Thyroid gland (tissue), 4 donors: ENCODE measurements at regions of chr19 and their contacts with region 1.

Region 1: GRCh38 chr19:17579661-17580244 is 24.3 kb downstream of the COLGALT1 start:
- DNase-seq: peak; percentile 16 to 18
- H3K4me3 ChIP-seq: no peak overlapping the region
- H3K27ac ChIP-seq: no peak overlapping the region
- H3K4me1 ChIP-seq: no peaks in the 10 kb centered on the region
- H3K27me3 ChIP-seq: no peaks in the 10 kb centered on the region
- CTCF ChIP-seq: no peak
- POLR2A ChIP-seq: no peak

Region 2: GRCh38 chr19:17721821-17722220 is 142.1 kb after region 1 on chr19:
- intact Hi-C with region 1: no loop called
- DNase-seq: no peak
- H3K4me3 ChIP-seq: no peak overlapping the region
- H3K27ac ChIP-seq: peak overlapping the region in 2 of 3 donors; percentile 15 to 66
- H3K4me1 ChIP-seq: peaks cover 22 to 43% of the 10 kb centered on the region in 2 donors
- H3K27me3 ChIP-seq: no peaks in the 10 kb centered on the region
- CTCF ChIP-seq: no peak
- POLR2A ChIP-seq: no peak

Region 3: GRCh38 chr19:17985037-17985818 is 405.5 kb after region 1 on chr19:
- intact Hi-C with region 1: loop called (anchors 10 kb)
- DNase-seq: no peak
- H3K4me3 ChIP-seq: no peak overlapping the region
- H3K27ac ChIP-seq: no peak overlapping the region
- H3K4me1 ChIP-seq: no peaks in the 10 kb centered on the region
- H3K27me3 ChIP-seq: no peaks in the 10 kb centered on the region
- CTCF ChIP-seq: no peak
- POLR2A ChIP-seq: no peak